MCF 10A (cell line): ENCODE measurements at regions of chr1 and their contacts with region 1.

Region 1: DNA sequence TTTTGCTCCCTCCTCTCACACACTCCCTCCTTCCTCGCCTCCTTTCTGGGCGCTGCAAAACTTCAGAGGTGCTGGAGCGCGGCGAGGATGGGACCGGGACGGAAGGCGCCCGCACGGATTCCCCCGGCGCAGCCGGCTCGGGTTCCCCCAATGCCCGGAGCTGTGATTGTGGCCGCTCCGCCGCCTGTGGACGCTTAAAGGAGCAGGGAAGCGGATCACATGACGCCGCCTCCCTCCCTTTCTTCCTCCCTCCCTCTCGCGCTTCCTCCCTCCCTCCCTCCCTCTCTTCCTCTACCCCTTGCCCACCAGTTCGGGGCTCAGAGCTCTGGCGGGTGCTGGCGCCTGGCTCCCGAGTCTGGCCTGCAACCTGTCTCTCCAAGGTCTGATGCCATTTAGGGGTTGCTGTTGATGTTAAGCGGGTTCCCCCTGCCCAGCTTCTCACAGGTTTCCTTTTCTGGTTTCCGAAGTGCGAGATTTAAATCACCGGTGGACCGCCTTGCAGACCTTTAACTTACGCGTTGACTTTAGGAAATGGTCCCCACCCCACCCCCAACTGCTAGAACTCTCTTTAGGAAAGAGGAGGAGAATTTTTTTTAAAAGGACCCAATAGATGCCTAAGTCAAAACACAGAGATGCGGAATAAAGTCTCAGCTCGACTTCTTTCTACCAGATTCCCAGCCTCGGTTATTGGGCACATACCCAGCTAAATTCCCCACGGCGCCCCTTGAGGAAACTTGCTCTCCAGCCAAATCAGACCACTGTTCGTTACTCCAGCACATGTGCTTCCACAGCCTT is at the start of gene WLS:
- DNase-seq: peak; percentile 72
- H3K4me3 Mint-ChIP-seq: peak within 1 kb of the TSS; percentile 91
- H3K27ac Mint-ChIP-seq: peak within 1 kb of the TSS; percentile 42
- H3K4me1 Mint-ChIP-seq: peaks cover 19% of the 10 kb centered on the region
- H3K27me3 Mint-ChIP-seq: no peaks in the 10 kb centered on the region
- CTCF ChIP-seq: no peak
- total RNA-seq, gene WLS: 34.7 and 37.8 TPM in 2 replicates

Region 2: DNA sequence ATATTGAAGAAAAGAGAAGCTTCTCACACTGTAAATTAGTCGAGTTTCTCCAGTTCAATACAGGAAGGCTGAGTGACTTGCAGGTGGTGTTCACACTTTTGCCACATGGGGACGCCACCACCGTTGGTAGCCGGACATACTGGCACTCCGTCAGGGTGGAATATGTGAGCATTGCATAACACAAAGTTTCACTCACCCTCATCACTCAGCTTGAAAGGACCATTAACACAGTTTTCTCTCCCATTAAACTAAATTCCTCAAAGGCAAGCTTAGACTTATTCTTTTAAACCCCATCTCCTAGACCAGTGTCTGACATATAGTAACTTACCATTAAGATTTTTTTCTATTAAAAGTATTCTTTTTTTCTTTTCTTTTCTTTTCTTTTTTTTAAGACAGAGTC is 697.1 kb before region 1 on chr1:
- CTCF ChIA-PET with region 1: no interaction called
- POLR2A ChIA-PET with region 1: no interaction called
- intact Hi-C with region 1: no loop called
- DNase-seq: peak; percentile 85
- H3K4me3 Mint-ChIP-seq: no peak overlapping the region
- H3K27ac Mint-ChIP-seq: peak overlapping the region; percentile 12
- H3K4me1 Mint-ChIP-seq: peaks cover 6% of the 10 kb centered on the region
- H3K27me3 Mint-ChIP-seq: no peaks in the 10 kb centered on the region
- CTCF ChIP-seq: peak; percentile 95

Region 3: DNA sequence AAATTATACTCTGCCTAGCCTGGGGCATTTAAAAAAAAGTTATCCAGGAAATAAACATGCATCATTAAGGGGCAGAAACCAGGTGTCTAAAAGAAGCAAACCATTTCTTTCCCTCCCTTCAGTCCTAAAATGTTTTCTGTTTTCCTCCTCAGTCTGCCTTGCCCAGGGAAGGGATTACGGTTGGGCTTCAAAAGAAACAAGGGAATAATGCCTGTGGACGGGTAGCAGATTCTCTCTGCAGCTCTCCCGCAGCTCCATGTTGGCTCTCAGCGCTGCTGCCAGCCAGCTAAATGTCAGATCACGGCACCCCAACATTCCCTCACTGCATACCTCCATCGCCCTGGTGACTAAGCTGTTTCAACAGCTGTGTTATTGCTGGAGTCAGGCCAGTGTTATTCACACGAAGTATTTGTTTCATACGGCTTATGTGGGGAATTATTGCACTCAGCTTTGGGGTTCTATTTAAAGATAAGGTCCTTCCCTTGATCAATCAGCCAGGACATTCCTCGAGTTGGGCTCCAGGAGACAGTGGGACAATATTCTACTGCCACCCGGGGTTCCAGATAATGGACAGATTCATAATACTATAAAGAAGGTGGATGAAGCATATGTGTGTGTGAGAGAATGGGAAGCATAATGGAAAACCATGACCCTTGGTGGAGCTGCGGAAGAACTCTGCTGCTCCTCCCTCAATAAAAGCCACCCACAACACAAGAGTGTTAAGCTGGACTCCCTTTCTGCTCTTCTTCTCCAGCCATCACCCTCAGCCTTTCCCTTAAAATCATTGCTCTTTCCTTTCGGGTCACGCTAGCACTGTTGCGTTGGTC is 58.4 kb before region 1 on chr1:
- CTCF ChIA-PET with region 1: interaction called, 6 read pairs
- POLR2A ChIA-PET with region 1: interaction called, 37 read pairs
- intact Hi-C with region 1: loop called (anchors 1 kb)
- DNase-seq: peak; percentile 95
- H3K4me3 Mint-ChIP-seq: peak overlapping the region; percentile 68
- H3K27ac Mint-ChIP-seq: peak overlapping the region; percentile 92
- H3K4me1 Mint-ChIP-seq: peaks cover 45% of the 10 kb centered on the region
- H3K27me3 Mint-ChIP-seq: no peaks in the 10 kb centered on the region
- CTCF ChIP-seq: no peak

Region 4: GRCh38 chr1:68213843-68214242 is 18.7 kb before region 1 on chr1:
- CTCF ChIA-PET with region 1: no interaction called
- POLR2A ChIA-PET with region 1: interaction called, 15 read pairs
- intact Hi-C with region 1: no loop called
- DNase-seq: peak; percentile 86
- H3K4me3 Mint-ChIP-seq: peak overlapping the region; percentile 1
- H3K27ac Mint-ChIP-seq: peak overlapping the region; percentile 84
- H3K4me1 Mint-ChIP-seq: peaks cover 17% of the 10 kb centered on the region
- H3K27me3 Mint-ChIP-seq: no peaks in the 10 kb centered on the region
- CTCF ChIP-seq: no peak

Region 5: GRCh38 chr1:68331117-68331865 is 98.7 kb after region 1 on chr1:
- CTCF ChIA-PET with region 1: no interaction called
- POLR2A ChIA-PET with region 1: no interaction called
- intact Hi-C with region 1: loop called (anchors 5 kb)
- DNase-seq: peak; percentile 67
- H3K4me3 Mint-ChIP-seq: no peak overlapping the region
- H3K27ac Mint-ChIP-seq: peak overlapping the region; percentile 11
- H3K4me1 Mint-ChIP-seq: peaks cover 27% of the 10 kb centered on the region
- H3K27me3 Mint-ChIP-seq: no peaks in the 10 kb centered on the region
- CTCF ChIP-seq: no peak

Region 6: DNA sequence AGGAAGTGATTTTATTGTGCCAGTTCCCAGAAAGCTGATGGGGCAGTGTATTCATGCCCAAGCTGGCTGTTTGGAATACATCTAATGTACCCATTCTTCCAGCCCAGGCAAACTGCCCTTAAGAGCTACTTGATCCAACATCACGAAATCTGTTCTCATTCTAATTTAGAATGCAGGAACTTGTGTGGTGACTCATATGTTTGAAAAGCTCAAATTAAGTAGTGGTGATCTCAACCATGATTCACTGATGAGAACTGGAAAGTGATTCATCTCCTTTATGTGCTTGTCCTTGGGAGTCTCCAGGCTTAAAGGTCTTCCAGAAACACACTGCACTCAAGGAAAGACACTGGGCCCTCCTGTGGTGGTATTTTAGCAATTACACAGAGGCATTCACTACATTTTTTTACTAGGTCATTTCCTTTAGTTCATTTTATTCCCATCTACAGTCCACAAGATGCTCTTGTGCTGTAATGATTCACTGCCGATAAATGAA is 151.8 kb after region 1 on chr1:
- CTCF ChIA-PET with region 1: interaction called, 8 read pairs
- POLR2A ChIA-PET with region 1: interaction called, 6 read pairs
- intact Hi-C with region 1: loop called (anchors 5 kb)
- DNase-seq: peak; percentile 98
- H3K4me3 Mint-ChIP-seq: no peak overlapping the region
- H3K27ac Mint-ChIP-seq: peak overlapping the region; percentile 40
- H3K4me1 Mint-ChIP-seq: peaks cover 45% of the 10 kb centered on the region
- H3K27me3 Mint-ChIP-seq: no peaks in the 10 kb centered on the region
- CTCF ChIP-seq: peak; percentile 16